Mammary epithelial cell (primary cell): ENCODE measurements at regions of chr3 and their contacts with region 1.

Region 1: DNA sequence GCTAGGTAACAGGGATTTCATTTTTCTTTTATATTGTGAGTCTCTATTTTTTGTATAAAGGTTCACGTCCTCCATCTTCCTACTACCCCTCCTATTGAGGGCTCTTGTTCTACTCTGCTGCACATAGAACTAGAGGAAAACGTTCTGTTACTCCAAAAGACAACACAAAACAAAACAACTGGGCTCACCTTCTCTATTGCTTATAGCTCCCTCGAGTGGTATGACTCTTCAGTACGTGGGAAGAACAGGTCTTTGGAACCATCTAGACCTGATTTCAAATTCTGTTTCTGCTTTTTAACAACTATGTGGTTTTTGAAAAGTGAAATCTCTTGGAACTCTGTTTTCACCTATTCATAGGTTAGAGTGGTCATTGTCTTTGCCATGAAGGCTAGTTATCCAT is 515.3 kb downstream of the SOX2 start:
- DNase-seq: no peak
- H3K4me3 ChIP-seq: no peak overlapping the region
- H3K27ac ChIP-seq: no peak overlapping the region
- H3K4me1 ChIP-seq: no peaks in the 10 kb centered on the region
- H3K27me3 ChIP-seq: no peaks in the 10 kb centered on the region
- CTCF ChIP-seq: peak; percentile 3 to 38

Region 2: DNA sequence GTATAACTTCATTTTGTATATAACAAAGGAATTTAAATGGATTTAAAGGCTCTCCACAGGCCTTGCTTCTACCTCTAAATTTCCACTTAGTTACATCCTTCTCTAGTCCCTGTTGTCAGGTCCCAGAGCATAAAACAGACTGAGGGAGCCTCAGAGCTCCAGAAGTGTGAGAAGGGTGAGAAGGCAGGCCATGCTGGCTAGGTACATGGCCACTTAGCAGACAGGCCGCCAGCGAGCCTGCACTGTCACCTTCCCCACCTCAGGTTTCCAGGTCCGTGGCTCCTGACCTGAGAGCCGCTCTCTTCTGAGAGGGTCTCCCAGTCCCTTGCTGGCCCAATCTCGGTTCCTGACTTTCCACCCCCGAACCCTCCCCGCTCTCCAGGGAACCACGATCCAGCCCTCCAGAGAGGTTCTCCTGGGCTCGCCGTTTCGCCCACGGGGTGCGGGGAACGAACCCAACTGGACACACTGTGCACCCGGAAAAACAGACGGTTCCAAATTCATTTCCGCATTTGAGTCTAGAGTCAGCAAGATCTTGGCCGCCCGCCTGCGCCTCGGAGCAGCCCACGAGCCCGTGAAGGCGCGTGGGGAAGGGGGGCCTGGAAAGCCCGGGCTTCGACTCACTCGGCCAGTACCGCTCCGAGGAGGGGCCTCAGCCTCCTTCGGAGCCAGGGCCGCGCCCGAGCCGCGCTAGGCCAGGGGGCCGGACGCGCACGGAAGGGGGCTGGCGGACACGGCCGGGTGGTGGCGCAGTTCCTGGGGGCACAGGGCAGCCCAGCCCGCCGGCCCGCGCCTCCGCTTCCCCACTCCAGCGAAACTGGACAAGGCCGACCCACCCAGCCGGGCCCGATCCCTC is 532.0 kb before region 1 on chr3:
- CTCF ChIA-PET with region 1: no interaction called
- dilution Hi-C with region 1: no loop called
- in situ Hi-C with region 1: no loop called
- intact Hi-C with region 1: no loop called
- DNase-seq: no peak
- H3K4me3 ChIP-seq: peak overlapping the region; percentile 5 to 28 (median 17)
- H3K27ac ChIP-seq: no peak overlapping the region
- H3K4me1 ChIP-seq: peaks cover 17% of the 10 kb centered on the region
- H3K27me3 ChIP-seq: no peaks in the 10 kb centered on the region
- CTCF ChIP-seq: no peak

Region 3: DNA sequence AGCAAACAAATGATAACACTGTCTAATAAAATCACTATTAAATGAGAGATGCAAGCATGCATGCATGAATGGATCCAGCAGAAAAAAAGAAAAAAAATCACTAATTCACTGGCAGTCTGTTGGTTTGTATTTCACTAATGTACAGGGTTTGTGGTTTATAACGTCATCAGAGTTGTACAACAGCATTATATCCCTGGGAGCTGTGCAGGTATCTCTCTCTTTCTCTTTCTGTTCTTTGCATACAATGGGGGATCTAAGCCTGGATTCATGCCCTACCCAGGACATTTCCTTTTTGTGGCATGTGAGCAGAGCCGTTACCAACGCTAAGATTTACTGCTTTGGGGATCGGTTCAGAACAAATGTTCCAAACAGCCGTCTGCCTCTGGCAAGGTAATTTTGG is 285.7 kb before region 1 on chr3:
- CTCF ChIA-PET with region 1: no interaction called
- dilution Hi-C with region 1: no loop called
- in situ Hi-C with region 1: no loop called
- intact Hi-C with region 1: loop called (anchors 10 kb)
- DNase-seq: peak; percentile 23
- H3K4me3 ChIP-seq: no peak overlapping the region
- H3K27ac ChIP-seq: no peak overlapping the region
- H3K4me1 ChIP-seq: no peaks in the 10 kb centered on the region
- H3K27me3 ChIP-seq: no peaks in the 10 kb centered on the region
- CTCF ChIP-seq: no peak